ENCODE measurements at regions of chr11 and their contacts with region 1.

Region 1: DNA sequence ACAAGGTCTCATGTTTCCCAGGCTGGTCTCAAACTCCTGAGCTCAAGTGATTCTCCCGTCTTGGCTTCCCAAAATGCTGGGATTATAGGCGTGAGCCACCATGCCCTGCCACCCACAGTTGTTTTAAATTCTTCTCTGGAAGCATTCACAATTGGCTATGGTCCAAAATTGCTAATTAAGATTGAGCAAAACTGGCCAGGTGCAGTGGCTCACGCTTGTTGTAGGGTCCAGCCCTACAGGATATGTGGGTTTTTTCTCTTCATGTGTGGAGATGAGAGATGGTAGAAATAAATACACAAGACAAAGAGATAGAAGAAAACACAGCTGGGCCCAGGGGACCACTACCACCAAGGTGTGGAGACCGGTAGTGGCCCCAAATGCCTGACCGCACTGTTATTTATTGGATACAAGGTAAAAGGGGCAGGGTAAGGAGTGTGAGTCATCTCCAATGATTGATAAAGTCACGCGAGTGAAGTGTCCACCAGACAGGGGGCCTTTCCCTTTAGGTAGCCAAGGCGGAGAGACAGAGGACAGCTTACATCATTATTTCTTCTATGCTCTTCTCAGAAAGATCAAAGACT is 8.3 kb upstream of the ACY3 start:
- H3K4me3 Mint-ChIP-seq: no peak overlapping the region
- H3K27ac Mint-ChIP-seq: no peak overlapping the region
- H3K4me1 Mint-ChIP-seq: no peaks in the 10 kb centered on the region
- H3K27me3 Mint-ChIP-seq: peaks cover 5% of the 10 kb centered on the region

Region 2: GRCh38 chr11:67572747-67573419 is 85.9 kb before region 1 on chr11:
- intact Hi-C with region 1: loop called (anchors 2 kb)
- H3K4me3 Mint-ChIP-seq: peak overlapping the region; percentile 23
- H3K27ac Mint-ChIP-seq: no peak overlapping the region
- H3K4me1 Mint-ChIP-seq: peaks cover 7% of the 10 kb centered on the region
- H3K27me3 Mint-ChIP-seq: peaks cover 44% of the 10 kb centered on the region

Region 3: GRCh38 chr11:67613960-67614715 is 44.6 kb before region 1 on chr11:
- intact Hi-C with region 1: no loop called
- H3K4me3 Mint-ChIP-seq: peak overlapping the region; percentile 63
- H3K27ac Mint-ChIP-seq: peak overlapping the region; percentile 98
- H3K4me1 Mint-ChIP-seq: peaks cover 36% of the 10 kb centered on the region
- H3K27me3 Mint-ChIP-seq: peaks cover 35% of the 10 kb centered on the region

Region 4: GRCh38 chr11:67629386-67630227 is 29.2 kb before region 1 on chr11 and contains the start of gene NUDT8:
- intact Hi-C with region 1: loop called (anchors 1 kb)
- H3K4me3 Mint-ChIP-seq: peak within 1 kb of the TSS; percentile 84
- H3K27ac Mint-ChIP-seq: peak within 1 kb of the TSS; percentile 92
- H3K4me1 Mint-ChIP-seq: peaks cover 13% of the 10 kb centered on the region
- H3K27me3 Mint-ChIP-seq: peaks cover 11% of the 10 kb centered on the region